Breast epithelium (tissue), 4 donors: ENCODE measurements at regions of chr9 and their contacts with region 1.

Region 1: GRCh38 chr9:69785757-69786156 is 25.9 kb upstream of the PTAR1 start:
- DNase-seq: no peak
- H3K4me3 ChIP-seq: no peak overlapping the region
- H3K27ac ChIP-seq: no peak overlapping the region
- H3K4me1 ChIP-seq: no peaks in the 10 kb centered on the region
- H3K27me3 ChIP-seq: no peaks in the 10 kb centered on the region
- CTCF ChIP-seq: no peak
- POLR2A ChIP-seq: no peak

Region 2: GRCh38 chr9:69745716-69746437 is 39.9 kb before region 1 on chr9:
- intact Hi-C with region 1: no loop called
- DNase-seq: no peak
- H3K4me3 ChIP-seq: no peak overlapping the region
- H3K27ac ChIP-seq: no peak overlapping the region
- H3K4me1 ChIP-seq: no peaks in the 10 kb centered on the region
- H3K27me3 ChIP-seq: no peaks in the 10 kb centered on the region
- CTCF ChIP-seq: no peak
- POLR2A ChIP-seq: no peak

Region 3: DNA sequence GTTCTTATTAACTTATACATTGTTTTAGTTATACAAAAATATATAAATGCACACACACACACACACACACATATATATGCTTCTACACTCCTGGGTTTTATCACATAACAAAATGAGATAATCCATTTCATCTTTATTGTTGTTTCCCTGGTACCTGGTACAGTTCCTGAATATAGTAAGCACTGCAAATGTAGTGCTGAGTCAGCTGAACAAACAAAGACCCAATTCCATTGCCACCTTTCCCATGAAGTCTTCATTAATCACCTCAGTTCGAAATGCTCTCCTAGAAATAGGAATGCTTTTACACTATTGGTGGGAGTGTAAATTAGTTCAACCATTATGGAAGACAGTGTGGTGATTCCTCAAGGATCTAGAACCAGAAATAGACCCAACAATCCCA is 12.5 kb before region 1 on chr9:
- intact Hi-C with region 1: loop called (anchors 1 kb)
- DNase-seq: no peak
- H3K4me3 ChIP-seq: no peak overlapping the region
- H3K27ac ChIP-seq: no peak overlapping the region
- H3K4me1 ChIP-seq: no peaks in the 10 kb centered on the region
- H3K27me3 ChIP-seq: no peaks in the 10 kb centered on the region
- CTCF ChIP-seq: no peak
- POLR2A ChIP-seq: no peak

Region 4: DNA sequence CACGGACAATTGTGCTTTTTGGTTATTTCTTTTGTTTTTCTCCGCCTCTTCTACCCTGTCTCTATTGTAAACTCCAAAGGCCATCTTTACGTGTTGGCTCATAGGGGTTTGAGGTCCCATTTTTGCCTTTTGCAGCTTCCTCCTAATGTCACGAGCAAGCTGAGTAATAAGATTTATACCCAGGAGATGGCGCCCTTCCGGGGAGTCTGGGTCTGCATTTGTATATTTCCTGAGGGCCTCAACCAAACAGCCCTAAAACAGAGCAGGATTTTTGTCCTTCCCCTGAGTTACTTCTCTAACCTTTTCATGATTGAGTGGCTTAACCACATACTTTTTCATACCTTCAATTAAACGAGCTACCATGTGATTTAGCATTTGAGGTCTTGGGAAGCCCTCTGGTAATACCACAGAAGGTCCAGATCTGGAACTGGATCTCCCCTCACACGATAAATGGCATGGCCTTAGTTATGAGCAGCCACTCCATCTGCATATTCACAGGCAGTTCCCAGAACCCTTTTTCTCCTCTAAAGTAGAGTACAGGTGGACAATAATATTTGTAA is 23.6 kb after region 1 on chr9:
- intact Hi-C with region 1: no loop called
- DNase-seq: no peak
- H3K4me3 ChIP-seq: no peak overlapping the region
- H3K27ac ChIP-seq: no peak overlapping the region
- H3K4me1 ChIP-seq: no peaks in the 10 kb centered on the region
- H3K27me3 ChIP-seq: no peaks in the 10 kb centered on the region
- CTCF ChIP-seq: no peak
- POLR2A ChIP-seq: no peak

Region 5: GRCh38 chr9:69829484-69829883 is 43.7 kb after region 1 on chr9:
- intact Hi-C with region 1: no loop called
- DNase-seq: no peak
- H3K4me3 ChIP-seq: no peak overlapping the region
- H3K27ac ChIP-seq: no peak overlapping the region
- H3K4me1 ChIP-seq: no peaks in the 10 kb centered on the region
- H3K27me3 ChIP-seq: no peaks in the 10 kb centered on the region
- CTCF ChIP-seq: no peak
- POLR2A ChIP-seq: no peak

Region 6: DNA sequence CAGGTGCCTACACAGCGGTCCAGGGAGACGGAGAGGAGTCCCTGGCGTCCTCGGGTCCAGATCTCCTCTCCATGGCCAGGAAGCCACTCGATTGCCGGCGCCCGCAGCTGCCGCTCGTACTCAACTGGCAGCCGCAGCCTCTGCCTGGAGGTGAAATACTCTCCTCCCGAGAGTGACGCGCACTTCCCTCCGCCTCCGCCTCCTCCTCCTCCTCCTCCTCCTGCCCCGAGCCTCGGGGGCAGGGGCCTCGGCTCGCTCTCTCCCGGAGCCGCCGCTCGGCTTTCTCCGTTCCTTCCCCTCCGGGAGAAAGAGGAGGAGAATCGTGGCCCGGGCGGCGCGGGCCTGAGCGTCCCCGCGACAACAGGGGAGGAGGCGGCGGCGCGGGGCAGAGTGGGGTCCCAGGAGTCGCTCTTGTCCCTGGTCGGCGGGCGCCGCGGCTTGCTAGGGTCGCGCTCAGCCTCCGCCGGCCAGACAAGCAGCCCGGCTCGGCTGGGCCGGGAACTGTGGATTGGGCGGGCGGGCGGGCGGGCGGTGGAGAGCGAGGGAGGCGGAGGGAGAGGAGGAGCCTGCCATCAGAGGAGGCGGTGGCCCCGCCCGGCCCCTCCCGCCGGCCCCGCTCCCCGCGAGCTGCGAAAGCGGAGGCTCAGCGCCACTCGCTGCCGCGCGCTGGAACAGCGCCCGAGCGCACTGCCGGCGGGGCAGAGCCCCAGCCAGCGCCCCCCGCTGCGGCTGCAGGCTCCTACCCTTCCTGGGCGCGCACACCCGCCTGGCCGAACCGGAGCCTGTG is 1982.8 kb after region 1 on chr9 and contains the start of gene CEMIP2:
- intact Hi-C with region 1: no loop called
- DNase-seq: peak; percentile 85 to 89
- H3K4me3 ChIP-seq: peak within 1 kb of the TSS; percentile 76 to 91 (median 83)
- H3K27ac ChIP-seq: peak within 1 kb of the TSS; percentile 91 to 97
- H3K4me1 ChIP-seq: peaks cover 0 to 13% of the 10 kb centered on the region in 2 donors
- H3K27me3 ChIP-seq: no peaks in the 10 kb centered on the region
- CTCF ChIP-seq: no peak
- POLR2A ChIP-seq: peak; percentile 76
- total RNA-seq, gene CEMIP2: 79.0 to 144 (median 81.2) TPM